ENCODE measurements at regions of chr5 and their contacts with region 1.

Region 1: GRCh38 chr5:139968547-139969261 is 74.4 kb downstream of the NRG2 start:
- DNase-seq: peak; percentile 53
- H3K4me3 ChIP-seq: no peak overlapping the region
- CTCF ChIP-seq: peak; percentile 99

Region 2: DNA sequence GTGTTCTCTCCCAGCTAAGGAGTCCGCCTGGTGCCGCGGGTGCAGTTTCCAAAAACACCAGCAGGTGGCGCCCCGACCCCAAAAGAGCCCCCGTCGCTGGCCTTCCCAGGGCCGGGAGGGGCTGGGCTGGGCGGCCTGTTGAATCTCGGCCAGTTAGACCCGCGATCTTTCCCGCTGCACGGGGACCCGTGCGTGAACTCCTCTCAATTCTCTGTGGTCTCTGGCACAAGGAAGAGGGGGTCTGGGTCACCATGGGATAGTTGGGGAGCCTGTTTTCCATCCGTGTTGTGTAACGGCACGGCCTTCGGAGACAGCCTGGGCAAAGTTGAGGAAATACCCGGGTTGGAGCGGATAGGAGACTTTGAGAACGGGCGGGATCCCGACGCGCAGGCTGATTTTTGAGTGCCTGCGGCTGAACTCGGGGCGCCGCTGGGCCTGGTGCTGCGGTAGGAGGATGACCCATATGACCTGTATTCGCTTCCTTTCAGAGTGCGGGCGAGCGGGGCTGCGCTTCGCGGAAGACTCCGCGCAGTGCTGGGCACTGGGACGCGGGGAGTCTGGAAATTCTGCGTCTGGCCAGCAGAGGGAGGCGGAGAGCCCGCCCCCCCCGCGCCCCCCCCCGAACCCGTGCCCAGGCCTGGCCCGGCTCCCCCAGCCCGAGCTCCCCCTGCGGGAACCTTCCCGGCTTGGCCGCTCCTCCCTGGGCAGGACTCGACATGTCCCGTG is 181.0 kb before region 1 on chr5:
- in situ Hi-C with region 1: loop called (anchors 25 kb)
- DNase-seq: peak; percentile 36
- H3K4me3 ChIP-seq: peak overlapping the region; percentile 45
- CTCF ChIP-seq: peak; percentile 96

Region 3: GRCh38 chr5:139925650-139926640 is 42.8 kb before region 1 on chr5:
- in situ Hi-C with region 1: no loop called
- DNase-seq: no peak
- H3K4me3 ChIP-seq: no peak overlapping the region
- CTCF ChIP-seq: no peak